Uterus (tissue), 4 donors: ENCODE measurements at regions of chr22 and their contacts with region 1.

Region 1: GRCh38 chr22:22748297-22748743 is 103.9 kb downstream of the GGTLC2 start:
- DNase-seq: no peak
- H3K4me3 ChIP-seq: no peak overlapping the region
- H3K27ac ChIP-seq: no peak overlapping the region
- H3K4me1 ChIP-seq: no peaks in the 10 kb centered on the region
- H3K27me3 ChIP-seq: no peaks in the 10 kb centered on the region
- CTCF ChIP-seq: peak; percentile 30 to 43 (median 36)
- POLR2A ChIP-seq: no peak

Region 2: GRCh38 chr22:22710719-22711531 is 37.4 kb before region 1 on chr22:
- intact Hi-C with region 1: loop called (anchors 5 kb)
- DNase-seq: peak; percentile 26 to 29
- H3K4me3 ChIP-seq: no peak overlapping the region
- H3K27ac ChIP-seq: no peak overlapping the region
- H3K4me1 ChIP-seq: no peaks in the 10 kb centered on the region
- H3K27me3 ChIP-seq: no peaks in the 10 kb centered on the region
- CTCF ChIP-seq: peak; percentile 58 to 82 (median 70)
- POLR2A ChIP-seq: no peak

Region 3: GRCh38 chr22:22773979-22774604 is 25.8 kb after region 1 on chr22:
- intact Hi-C with region 1: no loop called
- DNase-seq: no peak
- H3K4me3 ChIP-seq: no peak overlapping the region
- H3K27ac ChIP-seq: no peak overlapping the region
- H3K4me1 ChIP-seq: no peaks in the 10 kb centered on the region
- H3K27me3 ChIP-seq: no peaks in the 10 kb centered on the region
- CTCF ChIP-seq: no peak
- POLR2A ChIP-seq: no peak